Caco-2 (cell line): ENCODE measurements at regions of chr15 and their contacts with region 1.

Region 1: GRCh38 chr15:52018693-52019387 is at the start of gene MAPK6:
- DNase-seq: peak; percentile 90 to 93
- H3K4me3 ChIP-seq: peak within 1 kb of the TSS; percentile 69
- H3K4me3 Mint-ChIP-seq: peak within 1 kb of the TSS; percentile 93
- H3K27ac Mint-ChIP-seq: peak within 1 kb of the TSS; percentile 96
- H3K4me1 ChIP-seq: peaks cover 12% of the 10 kb centered on the region; the same call in 1 of the 2 replicates
- H3K4me1 Mint-ChIP-seq: peaks cover 16% of the 10 kb centered on the region
- H3K27me3 ChIP-seq: no peaks in the 10 kb centered on the region
- H3K27me3 Mint-ChIP-seq: no peaks in the 10 kb centered on the region
- CTCF ChIP-seq: no peak
- total RNA-seq, gene MAPK6: 68.2 and 69.8 TPM in 2 replicates

Region 2: GRCh38 chr15:51971375-51972133 is 47.3 kb before region 1 on chr15 and contains the start of gene LEO1:
- CTCF ChIA-PET with region 1: no interaction called
- POLR2A ChIA-PET with region 1: no interaction called
- intact Hi-C with region 1: loop called (anchors 5 kb)
- DNase-seq: peak; percentile 92 to 95
- H3K4me3 ChIP-seq: peak within 1 kb of the TSS; percentile 91
- H3K4me3 Mint-ChIP-seq: peak within 1 kb of the TSS; percentile 93
- H3K27ac Mint-ChIP-seq: peak within 1 kb of the TSS; percentile 99
- H3K4me1 ChIP-seq: 0 out of 2 replicates have a peak, but pooled peaks cover 6% of the 10 kb centered on the region
- H3K4me1 Mint-ChIP-seq: peaks cover 8% of the 10 kb centered on the region
- H3K27me3 ChIP-seq: no peaks in the 10 kb centered on the region
- H3K27me3 Mint-ChIP-seq: no peaks in the 10 kb centered on the region
- CTCF ChIP-seq: peak in 1 of 2 experiments; percentile 48
- total RNA-seq, gene LEO1: 30.7 and 32.2 TPM in 2 replicates

Region 3: GRCh38 chr15:52071546-52071945 is 52.7 kb after region 1 on chr15:
- CTCF ChIA-PET with region 1: no interaction called
- POLR2A ChIA-PET with region 1: no interaction called
- intact Hi-C with region 1: loop called (anchors 2 kb)
- DNase-seq: peak; percentile 71 to 82
- H3K4me3 ChIP-seq: no peak overlapping the region
- H3K4me3 Mint-ChIP-seq: peak overlapping the region; percentile 65
- H3K27ac Mint-ChIP-seq: peak overlapping the region; percentile 63
- H3K4me1 ChIP-seq: peaks cover 28% of the 10 kb centered on the region
- H3K4me1 Mint-ChIP-seq: peaks cover 38% of the 10 kb centered on the region
- H3K27me3 ChIP-seq: no peaks in the 10 kb centered on the region
- H3K27me3 Mint-ChIP-seq: no peaks in the 10 kb centered on the region
- CTCF ChIP-seq: no peak